ENCODE measurements at regions of chr20 and their contacts with region 1.

Region 1: GRCh38 chr20:51650685-51651134 is 108.2 kb upstream of the NFATC2 start:
- DNase-seq: peak; percentile 86
- H3K4me3 ChIP-seq: no peak overlapping the region
- H3K27ac ChIP-seq: peak overlapping the region; percentile 75
- H3K4me1 ChIP-seq: peaks cover 52% of the 10 kb centered on the region
- H3K27me3 ChIP-seq: no peaks in the 10 kb centered on the region
- CTCF ChIP-seq: no peak

Region 2: GRCh38 chr20:49948809-49949548 is 1701.7 kb before region 1 on chr20:
- CTCF ChIA-PET with region 1: no interaction called
- POLR2A ChIA-PET with region 1: no interaction called
- intact Hi-C with region 1: no loop called
- DNase-seq: peak; percentile 21
- H3K4me3 ChIP-seq: no peak overlapping the region
- H3K27ac ChIP-seq: no peak overlapping the region
- H3K4me1 ChIP-seq: no peaks in the 10 kb centered on the region
- H3K27me3 ChIP-seq: no peaks in the 10 kb centered on the region
- CTCF ChIP-seq: no peak

Region 3: DNA sequence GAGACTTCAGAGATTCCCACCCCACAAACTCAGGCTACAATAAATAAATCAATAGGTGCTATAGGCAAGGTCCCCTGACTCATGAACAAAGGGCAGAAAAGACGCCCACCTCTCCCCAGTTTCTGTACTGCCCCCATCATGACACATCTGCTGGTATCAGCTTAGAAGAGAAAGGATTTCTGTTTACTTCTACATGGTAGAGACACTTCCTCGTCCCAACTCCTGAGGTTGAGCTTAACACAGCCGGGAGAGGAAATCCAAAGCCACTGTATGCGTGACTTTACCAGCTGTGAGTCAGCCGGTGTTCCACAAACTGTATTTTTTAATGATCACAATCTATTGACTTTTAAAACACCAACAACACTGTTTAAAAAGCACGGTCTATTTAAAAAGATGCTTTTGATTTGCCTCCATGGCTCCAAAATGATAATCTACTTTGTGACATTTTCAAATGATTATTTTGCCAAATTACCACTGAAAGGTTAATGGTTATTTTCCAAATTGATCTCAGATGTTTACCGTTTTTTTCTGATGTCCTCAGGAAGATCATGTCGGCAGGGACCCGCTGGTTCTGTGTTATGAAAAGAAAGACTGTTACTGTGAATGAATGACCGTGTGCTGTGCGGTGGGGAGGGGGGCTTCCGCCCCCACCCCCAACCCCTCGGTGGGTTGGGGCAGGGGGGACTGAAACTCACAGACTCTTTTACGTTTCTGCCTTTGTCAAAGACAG is 45.0 kb after region 1 on chr20:
- CTCF ChIA-PET with region 1: interaction called, 4 read pairs
- POLR2A ChIA-PET with region 1: interaction called, 4 read pairs
- intact Hi-C with region 1: loop called (anchors 5 kb)
- DNase-seq: peak; percentile 70
- H3K4me3 ChIP-seq: peak overlapping the region; percentile 40
- H3K27ac ChIP-seq: peak overlapping the region; percentile 81
- H3K4me1 ChIP-seq: peaks cover 38% of the 10 kb centered on the region
- H3K27me3 ChIP-seq: no peaks in the 10 kb centered on the region
- CTCF ChIP-seq: no peak

Measured in A673 (cell line).